Activated CD4-positive, alpha-beta memory T cell treated with anti-CD3 and anti-CD28 coated beads for 36 hours (primary cell): ENCODE measurements at regions of chr9 and their contacts with region 1.

Region 1: DNA sequence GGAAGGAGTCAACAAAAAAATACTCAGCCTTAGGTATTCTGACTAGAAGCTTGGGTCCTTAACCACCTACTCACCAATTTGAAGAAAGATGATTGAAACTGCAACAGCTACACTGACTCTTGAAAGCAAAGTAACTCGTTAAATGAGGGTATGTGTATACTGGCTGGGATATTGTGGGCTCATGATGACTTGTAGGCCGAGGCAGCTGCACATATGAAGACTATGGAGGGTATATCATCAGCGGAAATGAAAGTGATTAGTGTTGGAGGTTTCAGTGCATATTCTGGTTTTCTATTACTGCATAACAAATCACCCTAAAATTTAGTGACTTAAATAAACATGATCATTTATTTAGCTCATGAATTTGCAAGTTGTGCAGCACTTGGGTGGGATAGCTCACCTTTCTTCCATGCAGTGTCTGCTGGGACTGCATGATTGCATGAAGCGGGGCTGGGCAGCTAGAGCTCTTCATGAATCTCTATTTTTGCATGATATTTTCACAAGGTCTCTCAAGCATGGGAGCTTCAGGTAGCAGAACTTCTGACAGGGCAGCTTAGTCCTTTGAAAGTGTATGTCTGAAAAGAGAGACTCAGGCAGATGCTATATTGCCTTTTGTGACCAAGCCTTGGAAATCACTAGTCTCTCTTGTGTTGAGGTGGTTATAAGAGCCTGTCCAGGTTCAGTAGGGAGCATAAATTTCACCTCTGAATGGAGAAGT is 96.1 kb upstream of the CDKN2B start:
- DNase-seq: peak; percentile 60
- H3K4me3 Mint-ChIP-seq: no peak overlapping the region
- H3K27ac Mint-ChIP-seq: no peak overlapping the region
- H3K4me1 Mint-ChIP-seq: peaks cover 29% of the 10 kb centered on the region
- H3K27me3 Mint-ChIP-seq: peaks cover 32% of the 10 kb centered on the region

Region 2: GRCh38 chr9:21096172-21096900 is 1008.8 kb before region 1 on chr9:
- CTCF ChIA-PET with region 1: no interaction called
- POLR2A ChIA-PET with region 1: no interaction called
- intact Hi-C with region 1: no loop called
- DNase-seq: peak; percentile 49
- H3K4me3 Mint-ChIP-seq: peak overlapping the region; percentile 73
- H3K27ac Mint-ChIP-seq: peak overlapping the region; percentile 85
- H3K4me1 Mint-ChIP-seq: peaks cover 34% of the 10 kb centered on the region
- H3K27me3 Mint-ChIP-seq: no peaks in the 10 kb centered on the region

Region 3: GRCh38 chr9:21831961-21832509 is 273.1 kb before region 1 on chr9:
- CTCF ChIA-PET with region 1: no interaction called
- POLR2A ChIA-PET with region 1: interaction called, 4 read pairs
- intact Hi-C with region 1: loop called (anchors 1 kb)
- DNase-seq: peak; percentile 74
- H3K4me3 Mint-ChIP-seq: no peak overlapping the region
- H3K27ac Mint-ChIP-seq: peak overlapping the region; percentile 33
- H3K4me1 Mint-ChIP-seq: peaks cover 66% of the 10 kb centered on the region
- H3K27me3 Mint-ChIP-seq: no peaks in the 10 kb centered on the region

Region 4: DNA sequence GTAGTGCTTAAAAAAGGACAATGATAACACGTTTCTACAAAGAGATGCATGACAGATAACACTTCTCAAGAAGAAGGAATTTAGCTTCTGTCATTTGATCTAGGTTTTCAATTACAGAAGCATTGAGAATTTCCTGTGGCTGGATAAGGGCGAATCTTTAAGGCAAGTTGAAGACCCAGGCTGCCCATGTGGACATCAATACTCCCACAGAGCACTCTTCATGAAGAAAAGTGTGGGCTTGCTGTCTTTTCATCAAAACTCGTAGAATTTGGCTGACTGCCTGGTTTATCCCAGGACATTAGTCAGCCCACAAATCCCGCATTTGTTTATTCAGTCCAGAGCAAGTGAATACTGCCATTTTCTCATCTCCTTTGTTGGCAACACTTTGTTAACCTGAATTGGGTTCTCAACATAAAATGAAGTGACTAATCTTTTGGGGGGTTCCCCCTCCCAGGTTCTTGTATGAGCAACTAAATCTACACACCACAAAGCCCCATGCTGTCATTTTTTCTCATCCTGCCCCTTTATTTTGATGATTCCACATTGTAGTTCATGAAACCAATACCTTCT is 52.7 kb before region 1 on chr9:
- CTCF ChIA-PET with region 1: no interaction called
- POLR2A ChIA-PET with region 1: no interaction called
- intact Hi-C with region 1: loop called (anchors 1 kb)
- DNase-seq: peak; percentile 50
- H3K4me3 Mint-ChIP-seq: no peak overlapping the region
- H3K27ac Mint-ChIP-seq: no peak overlapping the region
- H3K4me1 Mint-ChIP-seq: peaks cover 26% of the 10 kb centered on the region
- H3K27me3 Mint-ChIP-seq: peaks cover 12% of the 10 kb centered on the region

Region 5: GRCh38 chr9:22119537-22120158 is 14.5 kb after region 1 on chr9:
- CTCF ChIA-PET with region 1: interaction called, 16 read pairs
- POLR2A ChIA-PET with region 1: no interaction called
- intact Hi-C with region 1: no loop called
- DNase-seq: peak; percentile 15
- H3K4me3 Mint-ChIP-seq: no peak overlapping the region
- H3K27ac Mint-ChIP-seq: no peak overlapping the region
- H3K4me1 Mint-ChIP-seq: no peaks in the 10 kb centered on the region
- H3K27me3 Mint-ChIP-seq: peaks cover 21% of the 10 kb centered on the region

Region 6: GRCh38 chr9:22175972-22176545 is 70.9 kb after region 1 on chr9:
- CTCF ChIA-PET with region 1: no interaction called
- POLR2A ChIA-PET with region 1: no interaction called
- intact Hi-C with region 1: loop called (anchors 2 kb)
- DNase-seq: no peak
- H3K4me3 Mint-ChIP-seq: no peak overlapping the region
- H3K27ac Mint-ChIP-seq: no peak overlapping the region
- H3K4me1 Mint-ChIP-seq: peaks cover 7% of the 10 kb centered on the region
- H3K27me3 Mint-ChIP-seq: peaks cover 15% of the 10 kb centered on the region

Region 7: GRCh38 chr9:22244141-22245011 is 139.2 kb after region 1 on chr9:
- CTCF ChIA-PET with region 1: interaction called, 7 read pairs
- POLR2A ChIA-PET with region 1: no interaction called
- intact Hi-C with region 1: loop called (anchors 5 kb)
- DNase-seq: peak; percentile 48
- H3K4me3 Mint-ChIP-seq: no peak overlapping the region
- H3K27ac Mint-ChIP-seq: no peak overlapping the region
- H3K4me1 Mint-ChIP-seq: peaks cover 20% of the 10 kb centered on the region
- H3K27me3 Mint-ChIP-seq: peaks cover 16% of the 10 kb centered on the region